ENCODE measurements at regions of chr20 and their contacts with region 1.

Region 1: GRCh38 chr20:10411673-10412072 is 22.3 kb downstream of the MKKS start:
- DNase-seq: no peak
- ATAC-seq: no peak
- H3K4me3 ChIP-seq: no peak overlapping the region
- H3K4me3 Mint-ChIP-seq: no peak overlapping the region
- H3K27ac ChIP-seq: no peak overlapping the region
- H3K27ac Mint-ChIP-seq: no peak overlapping the region
- H3K4me1 ChIP-seq: no peaks in the 10 kb centered on the region
- H3K4me1 Mint-ChIP-seq: peaks cover 2 to 8% (median 6%) of the 10 kb centered on the region in 3 donors
- H3K27me3 ChIP-seq: no peaks in the 10 kb centered on the region
- H3K27me3 Mint-ChIP-seq: no peaks in the 10 kb centered on the region

Region 2: DNA sequence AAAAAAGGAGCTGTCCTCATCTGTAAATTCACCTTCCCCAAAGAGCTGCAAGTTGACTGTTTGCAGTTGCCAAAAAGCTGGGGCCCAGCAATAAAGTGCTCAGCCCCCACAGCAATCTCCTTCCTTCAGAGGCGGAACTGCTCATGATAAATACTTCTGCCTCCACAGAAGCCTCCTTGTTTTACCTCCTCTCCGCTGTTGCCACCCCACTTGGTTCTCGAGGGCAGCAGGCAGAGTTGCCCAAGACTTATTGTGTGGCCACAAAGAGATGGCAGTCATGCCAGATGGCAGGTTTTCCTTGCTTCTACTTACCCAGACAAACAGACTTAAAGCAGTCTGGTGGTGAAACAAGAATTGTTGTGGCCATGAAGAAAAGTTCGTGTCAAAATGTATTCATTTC is 89.7 kb after region 1 on chr20:
- CTCF ChIA-PET with region 1: no interaction called
- POLR2A ChIA-PET with region 1: interaction called in 1 of 2 experiments, 13 read pairs
- DNase-seq: peak in 15 of 35 experiments; percentile 3 to 39 (median 10)
- ATAC-seq: peak; percentile 53 to 71 (median 64)
- H3K4me3 ChIP-seq: peak overlapping the region; percentile 35 to 40
- H3K4me3 Mint-ChIP-seq: peak overlapping the region; percentile 80 to 87 (median 81)
- H3K27ac ChIP-seq: peak overlapping the region; percentile 70
- H3K27ac Mint-ChIP-seq: peak overlapping the region; percentile 94 to 98
- H3K4me1 ChIP-seq: peaks cover 3 to 13% of the 10 kb centered on the region in 2 experiments
- H3K4me1 Mint-ChIP-seq: peaks cover 26 to 41% (median 41%) of the 10 kb centered on the region in 3 donors
- H3K27me3 ChIP-seq: no peaks in the 10 kb centered on the region
- H3K27me3 Mint-ChIP-seq: no peaks in the 10 kb centered on the region

Measured in T-cell (primary cell).